T-cell (primary cell): ENCODE measurements at regions of chr1 and their contacts with region 1.

Region 1: GRCh38 chr1:244952940-244953339 is 88.6 kb upstream of the HNRNPU start:
- DNase-seq: no peak
- ATAC-seq: no peak
- H3K4me3 ChIP-seq: no peak overlapping the region
- H3K4me3 Mint-ChIP-seq: no peak overlapping the region
- H3K27ac ChIP-seq: no peak overlapping the region
- H3K27ac Mint-ChIP-seq: no peak overlapping the region
- H3K4me1 ChIP-seq: no peaks in the 10 kb centered on the region
- H3K4me1 Mint-ChIP-seq: peaks cover 0 to 3% (median 0%) of the 10 kb centered on the region in 3 donors
- H3K27me3 ChIP-seq: peaks cover 0 to 5% of the 10 kb centered on the region in 2 experiments
- H3K27me3 Mint-ChIP-seq: peaks cover 0 to 4% of the 10 kb centered on the region in 2 donors

Region 2: GRCh38 chr1:244937099-244937498 is 15.8 kb before region 1 on chr1:
- CTCF ChIA-PET with region 1: no interaction called
- POLR2A ChIA-PET with region 1: no interaction called
- DNase-seq: no peak
- ATAC-seq: no peak
- H3K4me3 ChIP-seq: no peak overlapping the region
- H3K4me3 Mint-ChIP-seq: no peak overlapping the region
- H3K27ac ChIP-seq: no peak overlapping the region
- H3K27ac Mint-ChIP-seq: no peak overlapping the region
- H3K4me1 ChIP-seq: no peaks in the 10 kb centered on the region
- H3K4me1 Mint-ChIP-seq: peaks cover 0 to 3% (median 0%) of the 10 kb centered on the region in 3 donors
- H3K27me3 ChIP-seq: no peaks in the 10 kb centered on the region
- H3K27me3 Mint-ChIP-seq: peaks cover 0 to 5% of the 10 kb centered on the region in 2 donors

Region 3: DNA sequence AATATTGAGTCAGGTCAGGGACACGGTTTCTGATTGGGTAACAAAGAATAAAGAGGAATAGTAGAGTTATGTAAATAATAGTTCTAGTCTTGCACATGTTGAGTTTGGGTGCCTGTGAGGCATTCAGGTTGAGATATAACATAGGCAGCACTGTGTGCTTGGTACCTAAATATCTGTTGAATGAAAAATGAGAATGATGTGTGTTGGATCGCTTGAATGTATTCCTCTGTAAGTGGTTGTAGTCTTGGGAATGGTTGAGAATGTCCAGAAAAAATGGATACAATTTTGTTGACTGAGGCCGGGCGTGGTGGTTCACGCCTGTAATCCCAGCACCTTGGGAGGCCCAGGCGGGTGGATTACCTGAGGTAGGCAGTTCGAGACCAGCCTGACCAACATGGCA is 27.7 kb after region 1 on chr1:
- CTCF ChIA-PET with region 1: no interaction called
- POLR2A ChIA-PET with region 1: interaction called in 1 of 2 experiments, 13 read pairs
- DNase-seq: no peak
- ATAC-seq: no peak
- H3K4me3 ChIP-seq: no peak overlapping the region
- H3K4me3 Mint-ChIP-seq: no peak overlapping the region
- H3K27ac ChIP-seq: no peak overlapping the region
- H3K27ac Mint-ChIP-seq: no peak overlapping the region
- H3K4me1 ChIP-seq: no peaks in the 10 kb centered on the region
- H3K4me1 Mint-ChIP-seq: no peaks in the 10 kb centered on the region
- H3K27me3 ChIP-seq: no peaks in the 10 kb centered on the region
- H3K27me3 Mint-ChIP-seq: no peaks in the 10 kb centered on the region

Region 4: GRCh38 chr1:246608616-246609376 is 1655.9 kb after region 1 on chr1:
- CTCF ChIA-PET with region 1: no interaction called
- POLR2A ChIA-PET with region 1: no interaction called
- DNase-seq: peak in 1 of 35 experiments; percentile 9
- ATAC-seq: no peak
- H3K4me3 ChIP-seq: no peak overlapping the region
- H3K4me3 Mint-ChIP-seq: no peak overlapping the region
- H3K27ac ChIP-seq: no peak overlapping the region
- H3K27ac Mint-ChIP-seq: peak overlapping the region; percentile 49 to 75
- H3K4me1 ChIP-seq: peaks cover 0 to 13% of the 10 kb centered on the region in 2 experiments
- H3K4me1 Mint-ChIP-seq: peaks cover 69 to 76% (median 74%) of the 10 kb centered on the region in 3 donors
- H3K27me3 ChIP-seq: no peaks in the 10 kb centered on the region
- H3K27me3 Mint-ChIP-seq: no peaks in the 10 kb centered on the region